Ovary (tissue), 10 donors: ENCODE measurements at regions of chr7 and their contacts with region 1.

Region 1: DNA sequence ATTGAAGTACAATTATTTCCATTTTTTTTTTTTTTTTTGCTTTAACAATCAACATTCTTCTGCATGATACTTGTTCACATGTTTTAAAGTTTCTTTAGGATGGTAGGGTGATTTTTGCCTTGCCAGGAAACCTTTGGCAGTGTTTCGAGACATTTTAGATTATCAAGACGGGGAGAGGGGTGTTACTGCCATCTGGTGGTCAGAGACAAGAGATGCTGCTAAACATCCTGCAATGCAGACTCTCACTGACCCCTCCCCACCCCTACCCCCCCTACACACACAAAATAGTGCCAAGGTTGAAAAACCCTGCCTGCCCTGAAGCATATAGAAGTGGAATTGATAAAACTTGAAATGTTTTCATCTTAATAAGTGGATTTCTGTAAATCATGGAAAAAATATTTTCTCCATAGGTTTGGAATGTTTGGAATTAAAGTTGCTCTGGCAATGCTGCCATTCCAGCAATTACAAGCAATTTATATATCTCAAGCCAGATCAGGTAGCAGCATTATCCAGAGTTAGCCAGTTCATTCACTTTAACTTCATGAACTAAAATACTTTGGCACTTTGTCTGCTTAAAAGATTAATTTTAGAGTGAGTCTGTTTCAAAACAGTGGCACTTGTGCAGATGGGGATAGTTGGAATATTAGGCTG is 62.1 kb downstream of the SDHAF3 start:
- DNase-seq: peak in 4 of 5 donors; percentile 11 to 34 (median 24)
- H3K4me3 ChIP-seq: no peak overlapping the region
- H3K27ac ChIP-seq: no peak overlapping the region
- H3K4me1 ChIP-seq: no peaks in the 10 kb centered on the region
- H3K27me3 ChIP-seq: no peaks in the 10 kb centered on the region
- CTCF ChIP-seq: peak in 2 of 3 donors; percentile 21 to 64
- EP300 ChIP-seq: no peak
- POLR2A ChIP-seq: no peak

Region 2: DNA sequence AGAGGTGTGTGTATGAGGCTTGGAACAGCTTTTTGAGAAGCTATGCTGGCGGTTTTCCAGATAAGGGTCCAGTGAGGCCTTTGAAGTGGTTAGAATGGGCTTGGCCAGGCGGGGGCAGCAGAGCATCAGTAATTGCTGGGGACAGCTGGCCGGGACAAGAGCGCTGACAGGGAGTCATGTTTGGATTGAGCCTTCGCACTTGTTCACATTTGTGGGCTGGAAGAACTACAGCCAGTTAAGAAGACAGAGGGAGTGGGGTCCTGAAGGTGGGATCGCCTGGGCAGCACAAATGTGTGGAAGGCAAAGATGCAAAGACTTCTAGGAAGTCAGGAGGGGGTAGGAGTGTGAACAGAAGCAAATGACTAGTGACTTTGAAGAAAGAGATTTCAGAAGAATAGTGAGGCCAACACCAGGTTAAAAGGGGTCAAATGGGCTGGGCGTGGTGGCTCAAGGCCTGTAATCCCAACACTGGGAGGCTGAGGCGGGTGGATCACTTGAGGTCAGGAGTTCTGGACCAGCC is 74.8 kb before region 1 on chr7:
- intact Hi-C with region 1: loop called in 1 of 4 experiments (anchors 10 kb)
- DNase-seq: peak; percentile 61 to 84 (median 77)
- H3K4me3 ChIP-seq: no peak overlapping the region
- H3K27ac ChIP-seq: no peak overlapping the region
- H3K4me1 ChIP-seq: no peaks in the 10 kb centered on the region
- H3K27me3 ChIP-seq: no peaks in the 10 kb centered on the region
- CTCF ChIP-seq: peak; percentile 31 to 57 (median 40)
- EP300 ChIP-seq: no peak
- POLR2A ChIP-seq: no peak